ENCODE measurements at regions of chr19 and their contacts with region 1.

Region 1: GRCh38 chr19:16572332-16573211 is at the start of gene SLC35E1:
- H3K4me3 Mint-ChIP-seq: peak within 1 kb of the TSS; percentile 94
- H3K27ac Mint-ChIP-seq: peak within 1 kb of the TSS; percentile 93
- H3K4me1 Mint-ChIP-seq: peaks cover 52% of the 10 kb centered on the region
- H3K27me3 Mint-ChIP-seq: no peaks in the 10 kb centered on the region

Region 2: DNA sequence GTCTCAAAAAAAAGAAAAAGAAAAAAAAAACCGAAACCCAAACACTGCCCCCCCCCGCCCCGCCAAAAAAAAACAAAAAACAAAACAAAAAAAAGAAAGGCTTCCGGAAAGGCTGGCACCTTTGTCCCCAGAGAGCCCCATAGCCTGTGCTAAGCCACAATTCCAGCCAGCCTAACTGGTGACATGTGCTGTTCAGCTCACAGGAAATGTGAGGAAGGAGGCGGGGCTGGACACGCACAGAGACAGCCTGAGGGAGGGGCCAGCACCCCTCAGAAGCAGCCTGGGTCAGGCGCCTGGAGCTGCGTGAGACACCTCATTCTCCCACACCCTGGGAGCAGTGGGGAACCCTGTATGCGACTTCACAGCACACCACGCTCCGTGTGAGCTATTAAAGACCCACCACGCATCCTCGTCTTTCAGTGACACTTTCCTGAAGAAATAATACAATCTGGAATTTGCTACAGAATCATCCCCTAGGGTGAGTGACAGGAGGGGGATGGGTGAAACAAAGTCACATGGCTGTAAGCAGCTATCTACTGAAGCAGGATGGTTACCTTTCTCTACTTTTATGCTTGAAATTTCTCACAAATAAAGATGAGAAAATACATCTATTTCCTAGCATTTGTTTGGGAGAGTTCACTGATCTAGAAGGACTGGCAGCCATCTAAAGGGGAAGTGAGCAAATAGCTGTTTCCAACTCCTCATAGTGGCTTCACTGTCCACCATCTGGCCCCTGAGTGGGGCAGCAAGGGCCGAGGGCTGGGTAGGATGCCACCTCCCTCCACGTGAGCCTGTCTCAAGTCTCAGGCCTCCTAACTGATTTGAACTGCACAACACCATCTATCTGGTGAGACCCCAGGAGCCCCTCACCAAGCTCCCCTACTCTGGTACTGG is 11.9 kb after region 1 on chr19:
- intact Hi-C with region 1: loop called (anchors 1 kb)
- H3K4me3 Mint-ChIP-seq: peak overlapping the region; percentile 87
- H3K27ac Mint-ChIP-seq: peak overlapping the region; percentile 98
- H3K4me1 Mint-ChIP-seq: peaks cover 90% of the 10 kb centered on the region
- H3K27me3 Mint-ChIP-seq: no peaks in the 10 kb centered on the region

Measured in dendritic cell treated with granulocyte-macrophage colony-stimulating factor and Interleukin-4, amounts not matched to agents 40 ng/mL and 50 ng/mL, for 4 days (primary cell).